Mammary epithelial cell (primary cell): ENCODE measurements at regions of chr17 and their contacts with region 1.

Region 1: DNA sequence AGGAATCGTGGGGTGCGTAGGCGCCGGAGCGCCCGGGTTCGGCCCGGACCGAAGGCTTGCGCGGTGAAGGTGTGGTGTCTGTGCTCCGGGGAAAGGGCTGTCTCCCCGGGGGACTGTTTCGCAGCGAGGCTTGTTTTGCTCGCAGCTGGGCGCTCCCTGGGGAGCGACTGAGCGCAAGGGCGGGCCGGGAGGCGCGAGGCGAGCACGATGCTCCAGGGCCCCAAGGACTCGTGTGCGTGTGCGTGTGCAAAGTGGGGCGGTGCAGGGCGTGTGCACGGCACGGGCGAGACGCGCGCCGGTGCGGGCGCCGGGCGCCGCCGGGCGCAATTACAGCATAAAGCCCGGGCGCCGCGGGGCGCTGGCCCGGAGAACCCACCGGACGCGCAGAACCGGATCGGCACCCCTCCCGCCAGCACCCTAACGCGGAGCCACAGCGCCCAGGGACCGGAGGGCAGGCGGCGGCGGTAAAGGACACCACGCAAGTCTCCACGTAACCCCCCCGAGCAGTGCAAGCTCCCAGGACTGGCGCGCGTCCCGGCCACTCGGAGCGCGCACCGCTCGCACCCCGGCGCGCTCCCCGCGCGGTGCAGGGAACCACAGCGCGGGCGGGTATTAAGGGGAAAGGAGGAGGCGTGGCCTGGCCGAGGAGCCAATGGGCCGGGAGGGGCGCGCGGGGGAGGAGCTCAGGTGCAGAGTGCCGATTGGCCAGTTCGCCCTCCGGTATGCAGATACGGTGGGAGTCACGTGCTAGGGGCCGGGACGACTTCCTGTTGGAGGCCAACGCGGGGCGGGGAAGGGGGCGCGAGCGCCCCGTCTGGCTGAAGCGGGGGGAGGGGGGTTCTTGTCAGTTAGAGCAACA is at the start of gene TNRC6C:
- DNase-seq: peak; percentile 97
- H3K4me3 ChIP-seq: peak within 1 kb of the TSS; percentile 62 to 74 (median 70)
- H3K27ac ChIP-seq: no peak within 1 kb of the TSS
- H3K4me1 ChIP-seq: peaks cover 22% of the 10 kb centered on the region
- H3K27me3 ChIP-seq: peaks cover 7% of the 10 kb centered on the region
- CTCF ChIP-seq: peak in 1 of 2 donors; percentile 24
- total RNA-seq, gene TNRC6C: 2.7 to 9.1 TPM

Region 2: DNA sequence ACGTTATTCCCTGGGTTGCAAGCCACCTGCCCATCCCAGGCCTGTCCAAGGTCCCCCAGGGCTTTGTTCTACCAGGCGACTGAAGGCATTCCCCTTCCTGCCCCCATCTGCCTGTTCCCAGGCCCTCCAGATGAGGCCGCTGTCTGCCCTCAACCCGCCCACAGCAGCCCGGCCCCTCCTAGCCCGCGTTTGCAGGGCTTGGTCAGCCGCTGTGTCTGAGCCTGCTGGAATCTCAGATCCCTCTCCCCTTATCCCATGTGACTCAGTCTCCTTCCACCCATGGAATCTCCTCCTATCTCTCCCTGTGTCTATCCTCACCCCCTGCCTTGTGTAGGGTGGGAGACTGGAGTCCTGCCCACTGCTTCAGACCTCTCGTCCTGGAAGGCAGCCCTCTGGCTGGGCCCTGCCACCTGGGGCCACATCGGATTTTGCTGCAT is 185.6 kb before region 1 on chr17:
- CTCF ChIA-PET with region 1: no interaction called
- dilution Hi-C with region 1: no loop called
- in situ Hi-C with region 1: no loop called
- intact Hi-C with region 1: loop called (anchors 5 kb)
- DNase-seq: no peak
- H3K4me3 ChIP-seq: no peak overlapping the region
- H3K27ac ChIP-seq: no peak overlapping the region
- H3K4me1 ChIP-seq: no peaks in the 10 kb centered on the region
- H3K27me3 ChIP-seq: no peaks in the 10 kb centered on the region
- CTCF ChIP-seq: peak; percentile 40 to 73

Region 3: GRCh38 chr17:77869665-77870132 is 88.4 kb before region 1 on chr17:
- CTCF ChIA-PET with region 1: no interaction called
- dilution Hi-C with region 1: no loop called
- in situ Hi-C with region 1: no loop called
- intact Hi-C with region 1: no loop called
- DNase-seq: no peak
- H3K4me3 ChIP-seq: no peak overlapping the region
- H3K27ac ChIP-seq: no peak overlapping the region
- H3K4me1 ChIP-seq: no peaks in the 10 kb centered on the region
- H3K27me3 ChIP-seq: peaks cover 4% of the 10 kb centered on the region
- CTCF ChIP-seq: no peak

Region 4: GRCh38 chr17:77887464-77888241 is 70.4 kb before region 1 on chr17:
- CTCF ChIA-PET with region 1: no interaction called
- dilution Hi-C with region 1: no loop called
- in situ Hi-C with region 1: no loop called
- intact Hi-C with region 1: loop called (anchors 2 kb)
- DNase-seq: peak; percentile 24
- H3K4me3 ChIP-seq: peak overlapping the region; percentile 40 to 49 (median 41)
- H3K27ac ChIP-seq: no peak overlapping the region
- H3K4me1 ChIP-seq: peaks cover 12% of the 10 kb centered on the region
- H3K27me3 ChIP-seq: no peaks in the 10 kb centered on the region
- CTCF ChIP-seq: no peak

Region 5: DNA sequence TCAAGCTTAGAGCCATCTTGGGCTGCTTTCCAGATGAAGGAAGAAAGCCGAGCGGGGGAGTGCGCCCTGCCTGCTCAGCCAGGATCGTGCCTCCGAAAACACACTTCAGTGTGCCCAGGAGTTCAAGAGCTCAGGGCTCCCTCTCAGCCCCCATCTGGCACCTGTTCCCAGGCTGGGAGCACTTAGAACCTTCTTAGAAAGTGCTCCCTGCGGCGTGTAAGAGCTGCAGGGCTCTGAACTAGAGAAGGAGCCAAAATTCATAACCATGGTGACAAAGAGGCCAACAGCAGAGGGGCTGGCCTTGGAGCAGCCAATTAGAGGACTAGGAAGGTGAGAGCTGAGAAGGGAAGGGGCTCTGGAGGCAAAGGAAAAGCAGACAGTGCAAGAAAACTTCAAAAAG is 58.6 kb before region 1 on chr17:
- CTCF ChIA-PET with region 1: no interaction called
- dilution Hi-C with region 1: no loop called
- in situ Hi-C with region 1: no loop called
- intact Hi-C with region 1: no loop called
- DNase-seq: no peak
- H3K4me3 ChIP-seq: no peak overlapping the region
- H3K27ac ChIP-seq: no peak overlapping the region
- H3K4me1 ChIP-seq: no peaks in the 10 kb centered on the region
- H3K27me3 ChIP-seq: no peaks in the 10 kb centered on the region
- CTCF ChIP-seq: no peak

Region 6: DNA sequence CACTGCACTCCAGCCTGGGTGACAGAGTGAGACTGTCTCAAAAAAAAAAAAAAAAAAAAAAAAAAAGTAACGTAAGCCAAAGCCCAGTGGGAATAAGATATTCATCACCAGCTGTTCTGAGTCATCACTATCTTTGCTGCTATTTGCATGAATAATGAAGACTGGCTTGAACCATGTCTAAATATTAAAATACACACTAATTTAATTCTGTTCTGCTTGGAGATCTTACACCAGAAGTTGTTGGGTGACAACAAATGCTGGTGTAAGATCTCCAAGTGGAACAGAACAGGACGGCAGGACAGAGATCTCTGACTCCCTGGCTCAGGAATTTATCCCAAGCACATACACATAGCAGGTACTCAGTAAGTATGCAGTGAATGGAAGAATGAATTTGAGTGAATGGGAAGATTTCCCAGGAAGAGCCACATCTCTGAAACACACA is 599.5 kb after region 1 on chr17:
- CTCF ChIA-PET with region 1: interaction called, 21 read pairs
- dilution Hi-C with region 1: no loop called
- in situ Hi-C with region 1: no loop called
- intact Hi-C with region 1: no loop called
- DNase-seq: peak; percentile 61
- H3K4me3 ChIP-seq: no peak overlapping the region
- H3K27ac ChIP-seq: no peak overlapping the region
- H3K4me1 ChIP-seq: peaks cover 14% of the 10 kb centered on the region
- H3K27me3 ChIP-seq: no peaks in the 10 kb centered on the region
- CTCF ChIP-seq: no peak